ENCODE measurements at regions of chr1 and their contacts with region 1.

Region 1: GRCh38 chr1:97524211-97524610 is 396.6 kb downstream of the DPYD start:
- DNase-seq: no peak

Region 2: DNA sequence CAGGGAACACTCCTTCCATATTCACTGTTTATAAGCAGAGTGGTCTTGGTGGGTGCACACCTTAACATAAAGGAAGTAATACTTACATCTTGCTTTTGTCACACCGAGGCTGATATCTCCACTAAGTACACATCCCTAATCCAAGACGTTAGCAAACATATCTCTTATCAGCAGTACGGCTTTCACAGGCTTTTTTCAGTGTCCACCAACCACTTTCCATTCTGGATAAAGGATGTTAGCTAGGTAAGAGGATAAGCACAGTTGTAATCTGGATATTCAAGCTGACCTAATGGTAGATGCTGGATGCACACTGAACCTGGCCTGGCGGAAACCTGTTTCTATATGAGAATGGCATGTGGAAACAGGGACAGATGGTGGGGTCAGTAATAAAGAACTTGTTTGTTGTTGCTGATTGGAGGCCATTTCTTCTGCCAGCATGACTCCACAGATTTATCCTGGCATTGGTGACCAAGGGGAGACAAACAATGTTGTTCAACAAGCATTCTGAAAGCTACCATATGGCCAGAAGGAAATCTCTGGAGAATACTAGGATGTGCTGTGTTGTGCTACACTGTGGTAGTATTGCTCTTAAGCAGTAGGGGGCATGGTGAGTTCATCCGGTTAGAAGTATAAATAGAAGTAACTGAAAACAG is 386.2 kb before region 1 on chr1:
- intact Hi-C with region 1: loop called (anchors 10 kb)
- DNase-seq: no peak

Region 3: DNA sequence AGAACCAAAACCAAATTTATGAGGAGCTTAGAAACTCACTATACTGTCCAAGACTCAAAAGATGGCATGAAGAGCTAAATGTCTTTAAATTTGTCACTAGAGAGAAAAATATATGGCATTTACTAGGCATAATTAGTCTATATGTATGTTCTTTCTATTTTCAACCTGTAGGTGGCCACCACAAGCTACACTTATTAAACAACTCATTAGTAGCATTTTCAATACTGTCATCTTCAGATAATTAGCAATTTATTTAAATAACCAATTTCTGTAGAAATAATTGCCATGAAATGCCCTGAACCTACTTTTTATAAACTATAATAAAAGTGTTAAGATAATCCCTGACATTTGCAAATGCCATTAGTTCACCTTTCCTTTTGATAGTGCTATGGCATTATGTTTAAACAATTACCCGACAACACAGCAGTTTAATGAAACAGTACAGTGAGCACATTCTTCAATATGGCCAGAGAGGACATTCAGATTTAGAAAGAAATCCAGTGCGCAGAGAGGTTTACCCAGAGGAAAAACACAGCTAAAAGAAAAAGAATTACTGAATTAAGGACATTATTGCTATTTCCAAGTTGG is 280.1 kb before region 1 on chr1:
- intact Hi-C with region 1: loop called (anchors 10 kb)
- DNase-seq: no peak

Region 4: DNA sequence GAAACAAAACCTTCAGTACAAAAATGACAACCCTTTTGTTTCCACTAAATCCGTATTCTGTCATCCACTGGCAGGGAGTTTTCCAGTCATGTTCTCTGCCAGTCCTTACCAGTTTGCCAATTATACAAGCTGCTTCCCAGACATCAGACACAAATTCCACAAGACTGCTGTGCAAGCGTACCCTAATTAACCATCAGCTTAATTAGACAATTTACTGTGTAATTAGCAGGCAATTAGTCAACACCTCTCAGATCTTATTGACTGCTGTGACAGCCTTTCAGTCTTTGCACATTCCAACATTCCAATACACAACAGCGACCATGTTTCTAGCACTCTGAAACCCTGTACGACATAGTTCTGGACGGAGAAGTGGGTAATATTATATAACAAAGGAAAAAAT is 23.5 kb before region 1 on chr1:
- intact Hi-C with region 1: no loop called
- DNase-seq: no peak